ENCODE measurements at regions of chr10 and their contacts with region 1.

Region 1: GRCh38 chr10:119335671-119336353 is 128.4 kb downstream of the GRK5 start:
- DNase-seq: no peak
- H3K4me3 ChIP-seq: no peak overlapping the region
- H3K27ac ChIP-seq: no peak overlapping the region
- H3K4me1 ChIP-seq: no peaks in the 10 kb centered on the region
- H3K27me3 ChIP-seq: peaks cover 0 to 5% (median 0%) of the 10 kb centered on the region in 5 experiments

Region 2: GRCh38 chr10:119116326-119116951 is 219.4 kb before region 1 on chr10:
- CTCF ChIA-PET with region 1: no interaction called
- POLR2A ChIA-PET with region 1: interaction called, 10 read pairs
- DNase-seq: no peak
- H3K4me3 ChIP-seq: no peak overlapping the region
- H3K27ac ChIP-seq: no peak overlapping the region
- H3K4me1 ChIP-seq: peaks cover 4 to 20% (median 14%) of the 10 kb centered on the region in 4 experiments
- H3K27me3 ChIP-seq: no peaks in the 10 kb centered on the region

Region 3: GRCh38 chr10:119270762-119271366 is 64.9 kb before region 1 on chr10:
- CTCF ChIA-PET with region 1: no interaction called
- POLR2A ChIA-PET with region 1: no interaction called
- DNase-seq: peak in 1 of 3 donors; percentile 92
- H3K4me3 ChIP-seq: peak overlapping the region in 6 of 7 experiments; percentile 33 to 70 (median 45)
- H3K27ac ChIP-seq: no peak overlapping the region
- H3K4me1 ChIP-seq: peaks cover 10 to 38% (median 31%) of the 10 kb centered on the region in 4 experiments
- H3K27me3 ChIP-seq: no peaks in the 10 kb centered on the region